AG04450 (cell line): ENCODE measurements at regions of chr20 and their contacts with region 1.

Region 1: DNA sequence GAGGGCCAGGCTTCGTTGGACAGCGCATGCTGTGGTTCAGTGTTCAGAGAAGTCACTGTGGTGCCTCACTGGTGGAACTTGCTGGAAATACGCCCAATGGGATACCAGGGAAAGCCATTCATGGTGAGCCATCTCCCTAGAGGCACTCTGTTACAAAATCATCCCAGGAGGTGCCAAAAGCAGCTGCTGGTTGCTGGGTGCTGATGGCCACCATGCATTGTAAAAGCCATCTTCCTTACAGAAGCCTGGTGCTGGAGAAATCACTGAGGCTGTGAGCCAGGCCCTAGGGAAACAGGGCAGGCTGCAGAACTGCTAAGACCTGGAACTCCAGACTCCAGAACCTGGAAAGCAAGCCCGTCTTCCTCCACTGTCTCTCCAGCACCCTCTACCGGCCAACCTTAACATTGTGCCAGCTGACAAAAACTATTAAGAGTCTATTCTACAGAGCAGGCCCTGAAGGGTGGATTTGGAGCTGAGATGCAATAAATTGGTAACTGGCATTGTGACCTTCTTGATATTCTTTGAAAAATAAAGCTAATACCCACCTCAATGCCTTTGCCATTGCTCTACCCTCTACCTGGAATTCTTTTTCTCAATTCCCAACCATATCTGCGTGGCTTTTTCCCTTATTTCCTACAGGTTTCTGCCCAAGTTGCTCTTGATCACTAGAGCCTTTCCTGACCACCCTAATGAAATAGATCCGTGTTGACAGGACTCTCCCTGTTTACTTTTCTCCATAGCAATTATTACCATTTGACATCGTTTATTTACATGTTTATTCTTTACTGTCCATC is 18.5 kb downstream of the SNRPB start:
- DNase-seq: no peak
- H3K4me3 ChIP-seq: no peak overlapping the region
- H3K27ac ChIP-seq: no peak overlapping the region
- H3K27me3 ChIP-seq: no peaks in the 10 kb centered on the region
- CTCF ChIP-seq: peak; percentile 89

Region 2: DNA sequence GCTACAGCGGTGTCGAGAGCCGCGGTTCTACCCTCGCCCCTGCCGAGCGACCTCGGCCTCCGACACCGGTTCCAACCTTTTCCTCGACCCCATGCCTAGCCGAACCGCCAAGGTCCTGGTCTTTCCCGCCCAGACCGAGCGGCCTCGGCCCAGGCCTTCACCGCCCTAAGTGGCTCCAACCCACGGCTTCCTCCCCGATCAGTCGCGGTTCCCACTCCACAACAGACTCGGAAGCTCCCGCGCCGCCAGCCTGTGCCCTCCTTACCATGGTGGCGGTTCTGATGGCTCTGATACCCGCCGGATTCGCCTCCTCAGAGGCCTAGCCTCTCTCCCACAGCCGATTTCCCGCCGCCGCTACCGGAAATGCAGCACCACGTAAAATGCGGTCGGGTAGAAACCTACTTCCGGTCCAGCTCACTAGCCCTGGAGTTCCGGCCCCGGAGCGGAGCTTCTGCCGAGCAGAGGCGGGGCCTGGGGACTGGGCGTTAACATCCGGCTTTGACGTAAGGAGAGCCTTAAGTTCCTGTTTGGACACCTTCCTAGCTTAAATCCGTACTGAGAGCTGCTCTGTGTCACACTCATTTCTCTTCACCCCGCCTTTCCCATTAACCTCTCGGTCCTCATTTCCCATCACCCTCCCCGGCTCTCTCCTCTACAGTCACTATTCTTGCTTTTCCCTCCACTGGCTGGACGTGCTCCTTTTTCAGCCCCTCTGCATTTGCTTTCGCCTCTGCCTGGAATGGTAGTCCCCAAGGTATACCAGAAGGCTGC is 18.5 kb after region 1 on chr20 and contains the start of gene SNRPB:
- CTCF ChIA-PET with region 1: interaction called, 13 read pairs
- POLR2A ChIA-PET with region 1: interaction called, 5 read pairs
- DNase-seq: peak; percentile 97
- H3K4me3 ChIP-seq: peak within 1 kb of the TSS; percentile 94
- H3K27ac ChIP-seq: peak within 1 kb of the TSS; percentile 96
- H3K27me3 ChIP-seq: no peaks in the 10 kb centered on the region
- CTCF ChIP-seq: no peak
- polyA plus RNA-seq, gene SNRPB: 137 and 142 TPM in 2 replicates